Activated CD8-positive, alpha-beta memory T cell treated with anti-CD3 and anti-CD28 coated beads, Interleukin-2, amount 10 ng/mL, durations not matched to agents 7 days and 5 days (primary cell): ENCODE measurements at regions of chr1 and their contacts with region 1.

Region 1: GRCh38 chr1:54810100-54810942 is 9.2 kb upstream of the TTC22 start:
- DNase-seq: peak; percentile 84
- ATAC-seq: peak; percentile 72
- H3K4me3 Mint-ChIP-seq: no peak overlapping the region
- H3K27ac Mint-ChIP-seq: peak overlapping the region; percentile 55
- H3K4me1 Mint-ChIP-seq: peaks cover 80% of the 10 kb centered on the region
- H3K27me3 Mint-ChIP-seq: no peaks in the 10 kb centered on the region

Region 2: DNA sequence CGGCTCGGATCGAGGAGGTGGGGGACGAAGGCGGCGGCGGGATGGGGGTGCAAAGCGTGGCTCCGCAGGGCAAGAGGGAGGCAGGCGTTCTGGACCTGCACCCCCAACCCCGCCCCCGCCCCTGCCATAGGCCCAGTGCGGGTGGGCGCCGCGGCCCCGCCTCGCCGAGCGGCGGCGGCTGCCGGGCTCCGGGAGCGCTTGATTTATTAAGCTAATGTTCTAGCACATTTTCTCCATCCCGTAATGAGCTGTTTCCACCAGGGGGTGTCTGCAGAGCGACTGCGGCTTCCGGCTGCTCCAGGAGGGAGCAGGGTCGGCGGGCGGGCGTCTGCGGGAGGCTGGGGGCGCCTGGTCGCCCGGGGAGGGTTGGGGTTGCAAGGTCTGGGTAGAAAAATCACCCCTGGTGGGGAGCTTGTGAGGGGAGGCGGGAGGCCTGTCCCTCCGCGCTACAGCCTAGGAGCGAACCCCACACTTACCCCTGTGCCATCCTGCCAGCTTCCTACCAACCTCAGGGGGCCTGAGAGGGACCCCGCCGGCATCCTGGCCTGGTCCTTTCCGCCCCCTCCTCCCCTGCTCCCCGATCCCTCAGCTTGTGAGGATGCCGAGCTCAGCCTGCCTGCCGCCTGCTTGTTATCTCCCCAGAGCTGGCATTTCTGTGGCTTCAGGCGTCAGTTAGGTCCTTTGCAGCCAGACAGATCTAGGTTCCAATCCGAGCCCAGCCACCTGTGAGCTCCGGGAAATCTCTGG is 310.8 kb before region 1 on chr1:
- CTCF ChIA-PET with region 1: interaction called, 10 read pairs
- DNase-seq: peak; percentile 64
- ATAC-seq: peak; percentile 84
- H3K4me3 Mint-ChIP-seq: peak overlapping the region; percentile 42
- H3K27ac Mint-ChIP-seq: no peak overlapping the region
- H3K4me1 Mint-ChIP-seq: peaks cover 15% of the 10 kb centered on the region
- H3K27me3 Mint-ChIP-seq: peaks cover 66% of the 10 kb centered on the region

Region 3: DNA sequence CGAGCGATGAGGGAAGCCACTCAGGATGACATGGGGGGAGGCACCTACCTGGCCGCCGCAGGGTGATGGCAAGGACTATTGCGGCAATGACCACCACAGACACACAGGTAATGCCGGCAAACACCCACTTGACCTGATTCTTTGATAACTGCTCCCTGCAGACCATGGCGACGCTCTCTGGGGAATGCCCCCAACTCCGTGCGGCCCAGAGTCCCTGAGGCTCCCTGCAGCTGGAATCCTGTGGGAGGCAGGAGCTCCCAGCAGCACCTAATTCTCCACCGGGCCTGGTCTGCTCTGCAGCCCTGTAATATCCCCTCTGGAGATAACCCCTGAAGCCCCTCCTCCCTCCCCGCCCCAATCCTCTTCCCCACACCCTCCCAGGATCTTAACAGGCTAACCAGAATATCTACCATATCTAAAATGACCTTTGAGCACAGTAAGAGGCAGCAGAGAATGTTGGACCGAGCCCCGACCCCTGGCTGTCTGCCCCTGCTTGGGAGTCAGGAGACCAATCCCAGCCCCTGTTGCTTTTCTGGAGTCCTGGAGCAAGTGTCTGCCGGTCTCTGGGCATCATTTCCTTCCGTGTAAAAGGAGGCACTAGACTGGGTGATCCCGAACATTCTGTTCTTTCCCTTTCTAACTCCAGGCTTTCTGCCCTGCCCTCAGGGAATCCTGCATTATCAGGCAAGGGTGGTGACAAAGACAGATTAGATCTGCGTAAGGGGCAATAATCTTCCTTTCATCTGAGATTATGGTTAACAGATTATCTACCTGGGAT is 186.9 kb before region 1 on chr1 and contains the start of gene FAM151A:
- CTCF ChIA-PET with region 1: no interaction called
- DNase-seq: no peak
- ATAC-seq: no peak
- H3K4me3 Mint-ChIP-seq: no peak within 1 kb of the TSS
- H3K27ac Mint-ChIP-seq: no peak within 1 kb of the TSS
- H3K4me1 Mint-ChIP-seq: no peaks in the 10 kb centered on the region
- H3K27me3 Mint-ChIP-seq: peaks cover 6% of the 10 kb centered on the region
- total RNA-seq, gene FAM151A: not detected

Region 4: GRCh38 chr1:54671985-54672608 is 138.2 kb before region 1 on chr1:
- CTCF ChIA-PET with region 1: interaction called, 27 read pairs
- DNase-seq: peak; percentile 90
- ATAC-seq: peak; percentile 94
- H3K4me3 Mint-ChIP-seq: peak overlapping the region; percentile 5
- H3K27ac Mint-ChIP-seq: peak overlapping the region; percentile 73
- H3K4me1 Mint-ChIP-seq: peaks cover 14% of the 10 kb centered on the region
- H3K27me3 Mint-ChIP-seq: peaks cover 29% of the 10 kb centered on the region